ENCODE measurements at regions of chr5 and their contacts with region 1.

Region 1: DNA sequence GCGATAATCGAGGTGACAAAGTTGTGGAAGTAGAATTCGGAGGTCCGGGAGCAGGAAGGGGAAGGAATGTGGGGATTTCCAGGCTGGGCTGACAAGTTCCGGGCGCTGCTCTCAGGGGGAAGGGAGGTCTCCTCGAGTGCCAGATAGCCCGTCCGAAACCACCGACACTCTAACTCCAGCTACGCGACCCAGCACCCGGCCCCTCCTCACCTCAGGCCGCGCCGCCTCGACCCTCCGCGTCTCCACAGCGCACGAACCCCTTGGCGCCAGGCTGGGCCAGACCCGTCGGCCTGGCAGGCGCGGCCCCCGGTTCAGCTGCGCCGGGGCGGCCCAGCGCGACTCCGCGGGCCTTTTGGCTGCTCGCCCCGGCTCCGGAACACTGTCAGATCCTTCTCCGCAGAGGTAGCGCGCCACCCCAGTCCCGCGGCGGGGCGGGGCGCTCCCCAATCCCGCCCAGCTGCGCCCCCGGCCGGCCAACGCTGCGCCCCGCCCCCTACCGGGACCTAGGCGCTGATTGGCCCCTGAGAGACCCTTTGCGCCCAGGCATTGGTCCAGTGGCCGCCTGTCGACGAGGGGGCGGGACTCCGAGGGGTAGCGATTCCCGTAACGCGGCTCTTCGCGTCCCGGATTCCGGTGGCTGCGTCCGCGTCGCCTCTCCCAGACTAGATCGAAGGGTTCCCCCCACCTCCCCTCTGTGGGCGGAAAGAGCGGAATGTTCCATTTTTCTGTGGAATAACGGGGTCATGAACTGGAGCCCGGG is at the start of gene IL6ST:
- DNase-seq: peak; percentile 92 to 98 (median 96)
- ATAC-seq: peak; percentile 87 to 89
- H3K4me3 Mint-ChIP-seq: peak within 1 kb of the TSS; percentile 89 to 100 (median 99)
- H3K27ac Mint-ChIP-seq: peak within 1 kb of the TSS; percentile 95 to 100 (median 98)
- H3K4me1 Mint-ChIP-seq: peaks cover 35 to 62% (median 55%) of the 10 kb centered on the region in 4 donors
- H3K27me3 Mint-ChIP-seq: no peaks in the 10 kb centered on the region
- polyA plus RNA-seq, gene IL6ST: 39.5 to 64.7 (median 54.9) TPM

Region 2: GRCh38 chr5:56012281-56012963 is 17.7 kb after region 1 on chr5:
- POLR2A ChIA-PET with region 1: interaction called, 33 read pairs
- DNase-seq: peak in 5 of 10 donors; percentile 28 to 73 (median 48)
- ATAC-seq: peak; percentile 91 to 99
- H3K4me3 Mint-ChIP-seq: peak overlapping the region; percentile 6 to 58 (median 51)
- H3K27ac Mint-ChIP-seq: peak overlapping the region; percentile 41 to 92 (median 77)
- H3K4me1 Mint-ChIP-seq: peaks cover 18 to 38% (median 25%) of the 10 kb centered on the region in 4 donors
- H3K27me3 Mint-ChIP-seq: no peaks in the 10 kb centered on the region

Region 3: DNA sequence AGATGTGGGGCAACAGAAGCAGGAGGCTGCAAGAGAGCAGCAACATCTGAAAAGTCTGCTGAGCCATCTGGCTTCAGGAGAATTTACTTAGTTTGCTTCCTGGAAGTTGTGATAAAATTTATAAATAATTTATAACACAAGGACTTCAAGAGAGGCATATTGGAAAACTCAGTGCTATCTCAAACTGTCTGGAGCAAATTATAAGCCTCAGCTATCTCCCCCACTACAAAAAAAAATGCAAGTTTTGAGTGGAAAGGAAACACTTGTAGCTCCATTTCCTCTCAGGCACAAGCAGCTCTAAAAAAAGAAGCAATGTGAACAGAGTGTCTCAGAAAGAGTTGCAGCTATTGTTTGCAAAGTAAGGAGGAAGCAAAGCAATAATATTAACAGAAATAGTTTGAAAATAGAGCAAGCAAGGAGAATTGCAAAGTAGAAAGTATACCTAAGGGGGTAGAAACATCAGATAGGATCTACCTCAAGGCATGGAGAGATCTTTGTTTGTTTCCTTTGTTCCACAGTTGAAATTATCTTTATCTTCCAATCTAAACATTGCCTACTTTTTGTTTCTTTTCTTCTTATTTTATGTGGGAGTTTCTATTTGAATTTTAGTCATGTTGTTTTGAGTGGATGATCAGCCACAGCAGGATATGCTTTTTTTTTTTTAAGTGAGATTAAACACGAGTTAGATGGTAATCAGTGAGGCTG is 55.9 kb after region 1 on chr5:
- POLR2A ChIA-PET with region 1: interaction called, 66 read pairs
- DNase-seq: peak in 3 of 10 donors; percentile 44 to 62 (median 61)
- ATAC-seq: peak; percentile 65 to 74
- H3K4me3 Mint-ChIP-seq: peak overlapping the region; percentile 64 to 90 (median 80)
- H3K27ac Mint-ChIP-seq: peak overlapping the region; percentile 79 to 99 (median 89)
- H3K4me1 Mint-ChIP-seq: peaks cover 32 to 79% (median 58%) of the 10 kb centered on the region in 4 donors
- H3K27me3 Mint-ChIP-seq: no peaks in the 10 kb centered on the region

Region 4: GRCh38 chr5:56080375-56081052 is 85.8 kb after region 1 on chr5:
- POLR2A ChIA-PET with region 1: interaction called, 10 read pairs
- DNase-seq: no peak
- ATAC-seq: peak; percentile 54 to 61
- H3K4me3 Mint-ChIP-seq: peak overlapping the region in 9 of 10 donors; percentile 9 to 81 (median 66)
- H3K27ac Mint-ChIP-seq: peak overlapping the region; percentile 68 to 90 (median 84)
- H3K4me1 Mint-ChIP-seq: peaks cover 35 to 58% (median 50%) of the 10 kb centered on the region in 4 donors
- H3K27me3 Mint-ChIP-seq: no peaks in the 10 kb centered on the region

Region 5: GRCh38 chr5:56814963-56815658 is 820.4 kb after region 1 on chr5 and contains the start of gene MAP3K1:
- POLR2A ChIA-PET with region 1: interaction called, 12 read pairs
- DNase-seq: peak; percentile 71 to 94 (median 82)
- ATAC-seq: peak; percentile 71 to 76
- H3K4me3 Mint-ChIP-seq: peak within 1 kb of the TSS; percentile 86 to 95 (median 94)
- H3K27ac Mint-ChIP-seq: peak within 1 kb of the TSS; percentile 88 to 95 (median 93)
- H3K4me1 Mint-ChIP-seq: peaks cover 13 to 48% (median 32%) of the 10 kb centered on the region in 4 donors
- H3K27me3 Mint-ChIP-seq: no peaks in the 10 kb centered on the region
- polyA plus RNA-seq, gene MAP3K1: 15.3 to 20.3 (median 19.2) TPM